ENCODE measurements at regions of chr11 and their contacts with region 1.

Region 1: GRCh38 chr11:80103142-80103859 is 662.5 kb upstream of the TENM4 start:
- DNase-seq: no peak
- H3K4me3 ChIP-seq: no peak overlapping the region
- H3K27ac ChIP-seq: no peak overlapping the region
- H3K4me1 ChIP-seq: no peaks in the 10 kb centered on the region
- H3K27me3 ChIP-seq: no peaks in the 10 kb centered on the region
- CTCF ChIP-seq: no peak
- EP300 ChIP-seq: no peak
- POLR2A ChIP-seq: no peak

Region 2: GRCh38 chr11:79940151-79940550 is 163.2 kb before region 1 on chr11:
- intact Hi-C with region 1: no loop called
- DNase-seq: no peak
- H3K4me3 ChIP-seq: no peak overlapping the region
- H3K27ac ChIP-seq: no peak overlapping the region
- H3K4me1 ChIP-seq: no peaks in the 10 kb centered on the region
- H3K27me3 ChIP-seq: no peaks in the 10 kb centered on the region
- CTCF ChIP-seq: no peak
- EP300 ChIP-seq: no peak
- POLR2A ChIP-seq: no peak

Region 3: DNA sequence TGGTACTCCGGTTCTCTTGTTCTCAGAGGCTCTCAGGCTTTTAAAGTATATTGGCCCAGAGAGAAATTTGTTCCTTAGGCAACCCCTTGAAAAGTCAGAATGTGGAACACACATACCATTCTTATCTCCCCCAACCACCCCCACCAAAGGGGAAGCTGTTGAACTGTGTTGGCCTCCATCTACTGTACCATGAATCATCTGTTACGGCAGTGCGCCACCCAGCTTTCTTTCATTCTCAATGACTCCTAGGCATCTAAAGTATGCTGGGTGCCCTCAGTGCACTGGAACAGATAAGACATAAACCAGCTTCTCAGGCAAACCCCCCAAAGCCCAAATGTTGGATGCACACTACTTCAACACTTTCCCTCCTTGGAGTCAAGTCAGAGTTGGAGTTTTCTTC is 33.7 kb after region 1 on chr11:
- intact Hi-C with region 1: no loop called
- DNase-seq: no peak
- H3K4me3 ChIP-seq: no peak overlapping the region
- H3K27ac ChIP-seq: no peak overlapping the region
- H3K4me1 ChIP-seq: no peaks in the 10 kb centered on the region
- H3K27me3 ChIP-seq: no peaks in the 10 kb centered on the region
- CTCF ChIP-seq: no peak
- EP300 ChIP-seq: no peak
- POLR2A ChIP-seq: no peak

Region 4: GRCh38 chr11:80327956-80328614 is 224.8 kb after region 1 on chr11:
- intact Hi-C with region 1: loop called in 1 of 4 experiments (anchors 5 kb)
- DNase-seq: no peak
- H3K4me3 ChIP-seq: no peak overlapping the region
- H3K27ac ChIP-seq: no peak overlapping the region
- H3K4me1 ChIP-seq: no peaks in the 10 kb centered on the region
- H3K27me3 ChIP-seq: no peaks in the 10 kb centered on the region
- CTCF ChIP-seq: no peak
- EP300 ChIP-seq: no peak
- POLR2A ChIP-seq: no peak